Head of caudate nucleus (tissue), 42 donors: ENCODE measurements at regions of chr11 and their contacts with region 1.

Region 1: DNA sequence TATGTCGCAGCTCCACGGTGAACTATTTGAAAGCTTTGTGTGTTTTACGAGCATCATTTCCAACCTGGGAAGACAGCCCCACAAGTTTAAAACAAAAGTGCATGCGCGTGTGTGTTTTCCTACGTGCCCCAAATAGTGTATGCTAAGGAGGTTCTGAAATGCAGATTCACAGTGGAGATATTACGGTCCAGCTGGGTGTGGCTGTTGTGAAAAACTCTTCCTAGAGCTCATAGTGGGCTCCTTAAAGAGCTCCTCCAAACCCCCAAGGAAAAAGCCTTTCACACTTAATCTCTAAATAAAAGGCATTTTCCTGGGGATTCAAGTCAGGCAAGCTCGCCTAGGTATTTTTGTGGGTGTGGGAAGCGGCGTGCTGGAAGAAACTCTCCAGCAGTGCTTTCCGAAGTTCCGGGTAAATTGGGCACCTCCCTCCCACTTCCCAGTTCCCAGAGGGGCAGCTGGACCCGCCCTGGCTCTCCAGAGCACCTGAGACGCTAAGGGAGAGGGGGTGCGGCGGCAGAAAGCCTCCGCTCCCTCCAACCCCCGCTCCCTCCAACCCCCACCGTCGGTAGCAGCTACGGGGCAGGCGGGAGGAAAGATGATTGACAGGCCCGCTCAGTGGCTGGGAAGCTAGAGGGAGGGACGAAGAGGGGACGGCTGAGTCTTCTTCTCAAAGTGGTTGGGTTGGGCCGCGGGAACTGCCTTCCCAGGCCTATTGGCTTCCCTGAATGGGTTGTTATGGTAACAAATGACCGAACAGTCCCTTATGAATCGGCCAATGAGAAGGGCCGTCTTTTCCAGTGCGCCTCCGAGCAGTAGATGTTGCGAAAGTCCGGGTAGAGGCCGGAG is 558 bp upstream of the PCF11 start:
- DNase-seq: peak in 37 of 42 donors; percentile 27 to 100 (median 99)

Region 2: GRCh38 chr11:83019888-83020579 is 136.3 kb before region 1 on chr11:
- intact Hi-C with region 1: loop called (anchors 10 kb)
- DNase-seq: peak in 40 of 42 donors; percentile 38 to 88 (median 72)

Region 3: GRCh38 chr11:83193315-83194280 is 37.2 kb after region 1 on chr11 and contains the start of gene ANKRD42:
- intact Hi-C with region 1: loop called (anchors 1 kb)
- DNase-seq: peak; percentile 88 to 97 (median 94)